ENCODE measurements at regions of chr1 and their contacts with region 1.

Region 1: DNA sequence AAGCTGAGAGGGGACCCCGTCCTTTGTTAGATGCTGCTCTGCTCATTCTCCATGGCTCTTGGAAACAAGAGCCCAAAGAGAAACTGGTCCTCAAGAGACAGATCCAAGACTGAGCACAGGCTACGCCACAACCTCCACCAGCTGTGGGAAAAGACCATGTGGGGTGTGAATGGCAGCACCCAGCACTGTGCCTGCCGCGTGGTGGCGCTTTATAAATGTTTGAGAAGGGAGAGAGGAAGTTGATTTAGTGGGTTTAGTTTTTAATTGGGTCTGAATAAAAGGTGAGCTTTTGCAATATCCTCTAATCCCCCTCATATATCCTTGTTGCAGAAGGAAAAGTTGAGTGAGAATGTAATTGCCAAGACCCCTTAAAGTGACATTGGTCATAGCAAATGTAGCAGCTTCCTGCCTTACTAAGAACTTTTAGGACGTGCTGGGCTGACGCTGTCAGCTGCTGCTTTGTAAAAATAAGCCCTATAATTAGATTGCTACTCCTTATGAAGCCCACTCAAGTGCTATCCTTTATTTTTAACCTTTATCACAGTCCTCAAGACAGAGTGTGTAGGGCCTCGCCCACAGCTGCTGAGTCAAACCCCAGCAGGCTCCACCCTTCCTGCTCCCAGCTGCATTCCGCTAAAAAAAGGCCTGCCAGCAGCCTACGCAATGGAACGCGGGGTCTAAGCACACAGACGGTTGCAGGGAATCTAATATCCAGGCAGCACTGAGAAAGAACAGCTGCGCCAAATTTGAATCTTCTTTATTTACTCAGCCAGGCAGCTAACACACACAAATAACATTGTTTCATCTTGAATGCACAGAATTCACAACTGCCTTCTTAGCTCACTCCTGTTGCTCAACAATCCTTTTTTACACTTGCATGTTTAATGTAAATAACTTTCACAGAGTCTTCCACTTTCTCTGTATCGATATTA is 47.4 kb upstream of the PRDX6 start:
- DNase-seq: peak; percentile 15 to 75
- H3K4me3 ChIP-seq: peak overlapping the region in 3 of 4 experiments; percentile 18 to 43 (median 23); a peak in 4 of 8 replicates
- H3K27ac ChIP-seq: peak overlapping the region; percentile 56; the same call in 1 of the 2 replicates
- H3K4me1 ChIP-seq: peaks cover 3 to 19% (median 10%) of the 10 kb centered on the region in 4 experiments; a peak in 5 of 7 replicates
- H3K27me3 ChIP-seq: no peaks in the 10 kb centered on the region
- CTCF ChIP-seq: peak; percentile 57 to 74 (median 74)
- EP300 ChIP-seq: no peak
- POLR2A ChIP-seq: no peak; a peak in 1 of 3 replicates
- RAD21 ChIP-seq: peak; percentile 33 to 45; a peak in 2 of 4 replicates

Region 2: GRCh38 chr1:173444757-173445156 is 15.0 kb after region 1 on chr1:
- CTCF ChIA-PET with region 1: interaction called, 28 read pairs
- POLR2A ChIA-PET with region 1: interaction called, 3 read pairs
- DNase-seq: no peak
- H3K4me3 ChIP-seq: no peak overlapping the region
- H3K27ac ChIP-seq: 0 out of 2 replicates have a peak overlapping the region, but pooled peaks have one; percentile 40
- H3K4me1 ChIP-seq: peaks cover 0 to 16% (median 8%) of the 10 kb centered on the region in 4 experiments; a peak in 3 of 7 replicates
- H3K27me3 ChIP-seq: no peaks in the 10 kb centered on the region
- CTCF ChIP-seq: no peak
- EP300 ChIP-seq: no peak
- POLR2A ChIP-seq: no peak
- RAD21 ChIP-seq: no peak

Region 3: DNA sequence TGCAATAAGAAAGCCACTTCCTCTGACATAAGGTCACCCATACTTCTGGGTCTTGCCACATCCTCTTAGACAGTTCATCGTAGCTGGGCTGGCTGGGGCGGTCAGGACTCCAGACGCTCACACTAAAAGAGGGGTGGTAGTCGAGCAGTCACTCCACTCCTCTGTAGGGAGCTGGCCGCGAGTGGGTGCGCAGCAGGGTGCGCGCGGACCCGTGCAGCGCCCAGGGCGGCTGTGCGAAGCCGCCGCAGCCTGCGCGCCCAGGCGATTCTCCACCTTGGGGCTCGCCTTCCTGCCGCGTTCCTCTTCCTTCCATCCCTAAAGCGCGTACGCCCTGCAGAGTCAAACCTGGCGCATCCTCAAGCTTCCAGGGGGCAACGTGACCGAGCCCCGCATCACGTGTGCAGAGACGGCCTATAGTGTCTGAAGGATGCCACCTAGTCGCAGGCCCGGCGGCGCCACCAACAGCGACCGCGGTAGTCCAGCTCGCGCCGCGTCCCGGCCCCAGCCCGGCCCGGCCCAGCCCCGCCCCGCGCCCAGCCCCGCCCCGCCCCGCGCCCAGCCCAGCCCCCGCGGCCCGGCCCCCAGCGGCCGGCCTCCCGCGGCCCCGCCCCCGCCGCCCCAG is 47.0 kb after region 1 on chr1:
- CTCF ChIA-PET with region 1: interaction called, 44 read pairs
- POLR2A ChIA-PET with region 1: interaction called, 30 read pairs
- DNase-seq: peak; percentile 86 to 88
- H3K4me3 ChIP-seq: peak overlapping the region; percentile 74 to 94 (median 87)
- H3K27ac ChIP-seq: 0 out of 2 replicates have a peak overlapping the region, but pooled peaks have one; percentile 52
- H3K4me1 ChIP-seq: peaks cover 2 to 18% (median 4%) of the 10 kb centered on the region in 4 experiments; a peak in 6 of 7 replicates
- H3K27me3 ChIP-seq: no peaks in the 10 kb centered on the region
- CTCF ChIP-seq: no peak
- EP300 ChIP-seq: no peak
- POLR2A ChIP-seq: peak in 1 of 2 experiments; percentile 80; a peak in 2 of 3 replicates
- RAD21 ChIP-seq: peak in 1 of 2 experiments; percentile 17; a peak in 1 of 4 replicates

Region 4: GRCh38 chr1:173507205-173507846 is 77.6 kb after region 1 on chr1:
- CTCF ChIA-PET with region 1: interaction called, 18 read pairs
- POLR2A ChIA-PET with region 1: no interaction called
- DNase-seq: no peak
- H3K4me3 ChIP-seq: no peak overlapping the region
- H3K27ac ChIP-seq: peak overlapping the region; percentile 35; the same call in 1 of the 2 replicates
- H3K4me1 ChIP-seq: peaks cover 5 to 9% (median 7%) of the 10 kb centered on the region in 4 experiments; a peak in 5 of 7 replicates
- H3K27me3 ChIP-seq: no peaks in the 10 kb centered on the region
- CTCF ChIP-seq: no peak
- EP300 ChIP-seq: no peak
- POLR2A ChIP-seq: no peak
- RAD21 ChIP-seq: no peak

Region 5: DNA sequence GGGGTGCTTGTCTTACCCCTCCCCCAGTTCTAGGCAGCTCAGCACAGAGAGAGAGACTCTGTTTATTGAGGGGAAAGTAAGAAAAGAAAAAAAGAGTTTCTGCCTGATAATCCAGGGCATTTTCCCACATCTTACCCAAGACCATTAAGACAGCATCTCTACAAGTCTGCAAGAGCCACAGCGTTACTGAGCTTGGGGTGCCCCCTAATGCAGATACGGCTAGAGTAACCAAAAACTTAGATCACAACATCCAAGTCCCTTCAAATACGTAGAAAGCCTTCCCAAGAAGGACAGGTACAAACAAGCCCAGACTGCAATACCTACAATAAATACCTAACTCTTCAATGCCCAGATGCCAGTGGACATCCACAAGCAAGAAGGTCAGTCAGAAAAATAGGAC is 199.2 kb after region 1 on chr1:
- CTCF ChIA-PET with region 1: interaction called, 10 read pairs
- POLR2A ChIA-PET with region 1: no interaction called
- DNase-seq: no peak
- H3K4me3 ChIP-seq: no peak overlapping the region
- H3K27ac ChIP-seq: no peak overlapping the region
- H3K4me1 ChIP-seq: no peaks in the 10 kb centered on the region
- H3K27me3 ChIP-seq: no peaks in the 10 kb centered on the region
- CTCF ChIP-seq: peak in 2 of 3 experiments; percentile 17 to 36; a peak in 2 of 4 replicates
- EP300 ChIP-seq: no peak
- POLR2A ChIP-seq: no peak
- RAD21 ChIP-seq: peak; percentile 63 to 69

Measured in H1 (cell line).